Gastrocnemius medialis (tissue), 4 donors: ENCODE measurements at regions of chr22 and their contacts with region 1.

Region 1: DNA sequence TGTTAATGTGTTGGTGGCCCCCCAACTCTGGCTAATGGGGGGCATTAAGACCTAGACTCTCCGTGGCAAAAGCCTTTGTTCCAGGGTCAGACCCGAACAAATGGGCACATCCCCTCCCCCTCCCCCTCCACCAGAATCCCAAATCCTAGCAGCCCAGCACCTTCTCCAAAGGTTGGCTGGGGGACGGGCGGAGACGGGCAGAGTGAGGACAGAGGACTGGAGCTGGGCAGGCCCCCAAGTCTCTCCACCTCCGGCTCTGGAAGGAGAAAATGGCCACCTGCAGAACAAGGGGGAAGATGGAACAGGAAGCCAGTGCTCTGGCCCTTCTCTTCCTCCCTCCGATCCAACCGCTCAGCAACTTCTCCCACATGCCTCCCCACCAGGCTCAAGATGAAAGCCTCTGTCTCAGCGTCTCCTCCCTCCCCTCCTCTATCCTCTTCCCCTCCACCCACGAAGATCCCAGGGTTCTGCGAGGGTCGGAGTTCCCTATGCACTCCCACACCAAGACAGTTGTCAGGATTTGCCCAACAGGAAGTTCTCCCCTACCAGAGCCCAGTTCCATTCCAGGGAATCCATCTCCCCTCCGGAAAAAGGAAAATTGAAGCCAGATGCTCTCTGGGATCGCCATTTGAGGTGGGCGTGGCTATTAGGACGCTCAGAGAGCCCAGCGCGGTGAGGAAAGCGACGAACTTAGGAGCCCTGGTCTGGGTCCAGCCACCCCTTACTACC is 20.1 kb downstream of the ADA2 start:
- DNase-seq: peak; percentile 13 to 22
- ATAC-seq: peak; percentile 60 to 64
- H3K4me3 ChIP-seq: peak overlapping the region; percentile 25 to 53 (median 38)
- H3K27ac ChIP-seq: peak overlapping the region; percentile 27 to 76 (median 66)
- H3K4me1 ChIP-seq: no peaks in the 10 kb centered on the region
- H3K27me3 ChIP-seq: no peaks in the 10 kb centered on the region
- CTCF ChIP-seq: no peak
- POLR2A ChIP-seq: no peak

Region 2: DNA sequence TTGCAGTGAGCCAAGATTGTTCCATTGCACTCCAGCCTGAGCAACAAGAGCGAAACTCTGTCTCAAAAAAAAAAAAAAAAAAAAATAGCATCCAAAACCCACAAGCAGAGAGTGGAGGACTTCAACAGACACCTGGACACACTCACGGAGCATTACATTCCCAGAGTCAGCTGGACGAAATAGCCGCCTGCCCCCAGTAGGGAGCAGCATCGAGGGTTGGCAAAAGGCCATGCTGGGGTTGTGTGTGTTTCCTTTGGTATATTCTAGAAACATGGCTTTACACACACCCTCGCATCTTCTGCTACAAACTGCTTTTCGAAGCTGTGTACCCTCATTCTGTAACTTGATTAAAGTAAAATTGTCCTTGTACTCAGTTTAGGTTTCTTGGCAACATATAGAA is 14.8 kb after region 1 on chr22:
- in situ Hi-C with region 1: no loop called
- intact Hi-C with region 1: no loop called
- DNase-seq: peak; percentile 60 to 73
- ATAC-seq: peak; percentile 70 to 94
- H3K4me3 ChIP-seq: no peak overlapping the region
- H3K27ac ChIP-seq: no peak overlapping the region
- H3K4me1 ChIP-seq: no peaks in the 10 kb centered on the region
- H3K27me3 ChIP-seq: no peaks in the 10 kb centered on the region
- CTCF ChIP-seq: peak; percentile 36 to 58 (median 52)
- POLR2A ChIP-seq: no peak

Region 3: DNA sequence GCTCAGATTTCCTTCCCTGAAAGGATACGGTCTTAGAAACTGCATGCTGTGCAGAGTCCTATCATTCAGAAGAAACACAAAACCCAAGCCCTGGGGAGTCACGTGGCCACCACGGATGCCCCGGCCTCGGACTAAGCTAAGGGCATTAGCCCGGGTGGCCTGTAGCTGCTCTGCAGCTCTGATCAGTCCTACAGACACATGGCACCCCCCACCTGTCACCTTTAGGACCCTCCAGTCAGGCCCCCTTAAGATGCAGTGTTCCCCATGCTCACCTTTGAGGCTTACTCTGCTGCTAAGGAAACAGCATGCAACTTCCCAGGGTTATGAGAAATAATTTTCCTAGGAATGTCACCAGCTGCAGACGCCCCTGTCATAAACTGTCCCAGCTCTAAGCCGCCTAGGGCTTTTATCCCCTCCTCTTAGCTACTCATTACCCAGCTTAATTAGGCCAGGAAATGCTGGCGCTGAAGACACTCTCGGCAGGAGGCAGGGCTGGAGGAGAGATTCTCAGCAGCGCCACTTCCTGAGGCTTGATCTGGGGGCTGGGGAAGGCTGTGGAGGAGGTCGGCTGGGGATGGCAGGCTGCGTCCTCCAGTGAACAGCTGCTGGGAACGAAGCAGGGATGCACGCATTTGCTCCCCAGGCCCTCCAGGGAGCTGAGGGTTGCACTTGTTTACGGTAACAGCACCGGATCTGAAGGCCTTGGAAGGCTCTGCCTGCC is 67.2 kb after region 1 on chr22:
- in situ Hi-C with region 1: loop called in 1 of 4 experiments (anchors 10 kb)
- intact Hi-C with region 1: no loop called
- DNase-seq: peak; percentile 13 to 71
- ATAC-seq: peak; percentile 14 to 26
- H3K4me3 ChIP-seq: no peak overlapping the region
- H3K27ac ChIP-seq: peak overlapping the region; percentile 93 to 98 (median 95)
- H3K4me1 ChIP-seq: peaks cover 32 to 43% of the 10 kb centered on the region in 2 donors
- H3K27me3 ChIP-seq: no peaks in the 10 kb centered on the region
- CTCF ChIP-seq: no peak
- POLR2A ChIP-seq: no peak

Region 4: GRCh38 chr22:17319546-17319945 is 120.4 kb after region 1 on chr22:
- in situ Hi-C with region 1: no loop called
- intact Hi-C with region 1: loop called (anchors 5 kb)
- DNase-seq: no peak
- ATAC-seq: no peak
- H3K4me3 ChIP-seq: no peak overlapping the region
- H3K27ac ChIP-seq: no peak overlapping the region
- H3K4me1 ChIP-seq: peaks cover 3% of the 10 kb centered on the region in 2 donors
- H3K27me3 ChIP-seq: no peaks in the 10 kb centered on the region
- CTCF ChIP-seq: no peak
- POLR2A ChIP-seq: no peak

Region 5: DNA sequence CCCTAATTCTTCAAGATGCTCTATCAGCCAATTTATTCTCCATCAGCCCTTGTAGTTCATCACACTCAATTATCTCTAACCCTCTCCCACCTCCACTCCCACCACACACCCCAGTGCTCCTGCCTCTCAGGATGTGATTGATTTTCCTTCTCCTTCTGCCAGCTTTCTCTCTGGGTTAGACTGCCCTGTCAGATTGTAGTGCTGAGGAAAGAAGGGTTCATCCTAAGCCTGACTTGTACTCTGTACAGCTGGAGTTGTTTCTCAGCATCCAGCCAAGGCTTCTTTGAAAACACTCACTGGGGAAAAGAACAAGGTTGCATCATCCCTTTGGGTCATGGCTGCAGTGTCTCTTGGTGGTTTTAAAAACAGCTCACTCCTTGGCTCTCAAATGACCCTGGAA is 231.2 kb after region 1 on chr22:
- in situ Hi-C with region 1: no loop called
- intact Hi-C with region 1: no loop called
- DNase-seq: peak; percentile 75 to 78
- ATAC-seq: peak; percentile 96 to 98
- H3K4me3 ChIP-seq: no peak overlapping the region
- H3K27ac ChIP-seq: peak overlapping the region; percentile 86 to 93 (median 90)
- H3K4me1 ChIP-seq: peaks cover 67 to 73% of the 10 kb centered on the region in 2 donors
- H3K27me3 ChIP-seq: no peaks in the 10 kb centered on the region
- CTCF ChIP-seq: no peak
- POLR2A ChIP-seq: no peak